Ascending aorta (tissue), 2 donors: ENCODE measurements at regions of chr19 and their contacts with region 1.

Region 1: GRCh38 chr19:10251792-10252694 is at the start of gene MRPL4:
- DNase-seq: peak; percentile 93 to 99
- H3K4me3 ChIP-seq: peak within 1 kb of the TSS; percentile 68 to 94
- H3K27ac ChIP-seq: peak within 1 kb of the TSS; percentile 68 to 71
- H3K4me1 ChIP-seq: peaks cover 6 to 7% of the 10 kb centered on the region in 2 donors
- H3K27me3 ChIP-seq: no peaks in the 10 kb centered on the region
- CTCF ChIP-seq: no peak
- total RNA-seq, gene MRPL4: 72.9 TPM

Region 2: GRCh38 chr19:9768175-9769112 is 483.6 kb before region 1 on chr19 and contains the start of gene ZNF846:
- intact Hi-C with region 1: no loop called
- DNase-seq: peak; percentile 69 to 95
- H3K4me3 ChIP-seq: peak within 1 kb of the TSS; percentile 77 to 94
- H3K27ac ChIP-seq: peak within 1 kb of the TSS; percentile 92 to 94
- H3K4me1 ChIP-seq: peaks cover 3 to 14% of the 10 kb centered on the region in 2 donors
- H3K27me3 ChIP-seq: no peaks in the 10 kb centered on the region
- CTCF ChIP-seq: no peak
- total RNA-seq, gene ZNF846: 1.9 TPM

Region 3: DNA sequence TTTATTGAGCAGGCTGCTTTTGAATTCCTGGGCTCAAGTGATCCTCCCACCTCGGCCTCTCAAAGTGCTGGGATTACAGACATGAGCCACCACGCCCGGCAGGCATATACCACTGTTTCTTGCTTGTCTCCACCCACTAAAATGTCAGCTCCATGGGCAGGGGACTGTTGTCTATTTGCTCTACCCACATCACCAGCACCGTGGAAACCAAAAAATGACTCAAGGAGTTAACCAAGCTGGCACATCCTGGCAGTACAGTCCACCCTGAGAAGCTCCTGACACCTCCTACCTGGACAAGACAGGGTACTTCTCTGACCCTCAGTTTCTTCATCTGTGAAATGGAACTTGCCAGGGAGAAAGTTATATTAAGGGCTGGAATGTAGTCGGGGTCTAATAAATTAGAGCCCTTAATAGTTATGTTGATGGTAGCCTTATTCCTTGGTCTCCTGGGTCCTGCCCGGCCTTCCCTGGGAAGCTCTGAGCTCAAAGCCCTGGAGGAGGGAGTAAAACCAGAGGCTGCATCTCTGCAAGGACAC is 224.8 kb before region 1 on chr19:
- intact Hi-C with region 1: loop called (anchors 2 kb)
- DNase-seq: no peak
- H3K4me3 ChIP-seq: peak overlapping the region in 1 of 2 donors; percentile 25
- H3K27ac ChIP-seq: no peak overlapping the region
- H3K4me1 ChIP-seq: peaks cover 0 to 5% of the 10 kb centered on the region in 2 donors
- H3K27me3 ChIP-seq: peaks cover 8% of the 10 kb centered on the region
- CTCF ChIP-seq: no peak

Region 4: GRCh38 chr19:10120538-10121189 is 131.4 kb before region 1 on chr19:
- intact Hi-C with region 1: loop called (anchors 5 kb)
- DNase-seq: peak in 1 of 2 donors; percentile 80
- H3K4me3 ChIP-seq: peak overlapping the region in 1 of 2 donors; percentile 99
- H3K27ac ChIP-seq: peak overlapping the region; percentile 84 to 87
- H3K4me1 ChIP-seq: peaks cover 15 to 27% of the 10 kb centered on the region in 2 donors
- H3K27me3 ChIP-seq: no peaks in the 10 kb centered on the region
- CTCF ChIP-seq: no peak

Region 5: GRCh38 chr19:10205636-10206035 is 46.4 kb before region 1 on chr19:
- intact Hi-C with region 1: no loop called
- DNase-seq: no peak
- H3K4me3 ChIP-seq: no peak overlapping the region
- H3K27ac ChIP-seq: no peak overlapping the region
- H3K4me1 ChIP-seq: no peaks in the 10 kb centered on the region
- H3K27me3 ChIP-seq: no peaks in the 10 kb centered on the region
- CTCF ChIP-seq: no peak

Region 6: DNA sequence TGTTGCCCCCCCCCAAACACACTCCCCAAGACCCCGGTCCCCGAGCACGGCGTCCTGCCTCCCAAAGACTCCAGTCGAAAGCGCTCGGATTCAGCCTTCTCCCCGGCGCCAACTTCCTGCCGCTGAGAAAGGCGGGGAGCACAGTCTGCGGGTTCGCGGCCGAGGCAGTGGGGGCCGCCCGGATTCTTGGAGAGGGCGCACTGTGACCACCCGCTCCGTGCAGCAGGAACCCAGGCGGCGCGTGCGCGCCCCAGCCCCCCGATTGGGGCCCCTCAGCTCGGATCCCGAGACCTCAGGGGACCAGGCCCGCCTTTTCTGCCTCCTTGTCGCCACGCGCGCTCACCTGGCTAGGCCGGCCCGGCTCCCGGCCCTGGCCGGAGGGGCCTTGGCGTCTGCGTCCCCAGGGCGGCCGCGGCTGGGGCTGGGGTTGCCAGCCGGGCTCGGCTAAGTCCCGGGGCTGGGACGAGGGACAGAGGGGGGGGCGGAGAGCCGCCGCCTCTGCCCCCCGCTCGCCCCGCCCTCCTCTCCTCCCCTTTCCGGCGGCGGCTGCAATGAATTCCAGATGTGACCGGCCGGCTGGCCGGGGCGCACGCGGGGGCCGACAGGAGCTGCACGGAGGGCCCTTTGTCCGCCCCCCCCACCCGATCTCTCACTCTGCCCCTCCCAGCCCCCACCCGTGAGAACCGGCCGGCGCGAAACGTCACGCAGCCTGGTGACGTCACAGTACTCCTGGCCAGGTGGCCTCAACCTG is 21.0 kb before region 1 on chr19 and contains the start of gene S1PR2:
- intact Hi-C with region 1: loop called (anchors 2 kb)
- DNase-seq: peak in 1 of 2 donors; percentile 87
- H3K4me3 ChIP-seq: peak within 1 kb of the TSS; percentile 73 to 98
- H3K27ac ChIP-seq: peak within 1 kb of the TSS; percentile 51 to 86
- H3K4me1 ChIP-seq: peaks cover 3 to 13% of the 10 kb centered on the region in 2 donors
- H3K27me3 ChIP-seq: no peaks in the 10 kb centered on the region
- CTCF ChIP-seq: no peak
- total RNA-seq, gene S1PR2: 24.3 TPM

Region 7: GRCh38 chr19:10292206-10292788 is 40.3 kb after region 1 on chr19:
- intact Hi-C with region 1: no loop called
- DNase-seq: peak; percentile 36 to 78
- H3K4me3 ChIP-seq: peak overlapping the region; percentile 43 to 62
- H3K27ac ChIP-seq: no peak overlapping the region
- H3K4me1 ChIP-seq: peaks cover 4 to 30% of the 10 kb centered on the region in 2 donors
- H3K27me3 ChIP-seq: peaks cover 19% of the 10 kb centered on the region
- CTCF ChIP-seq: no peak

Region 8: GRCh38 chr19:10363789-10364281 is 111.8 kb after region 1 on chr19:
- intact Hi-C with region 1: no loop called
- DNase-seq: no peak
- H3K4me3 ChIP-seq: no peak overlapping the region
- H3K27ac ChIP-seq: no peak overlapping the region
- H3K4me1 ChIP-seq: no peaks in the 10 kb centered on the region
- H3K27me3 ChIP-seq: no peaks in the 10 kb centered on the region
- CTCF ChIP-seq: no peak

Region 9: GRCh38 chr19:10380313-10381102 is 128.5 kb after region 1 on chr19 and contains the start of gene TYK2:
- intact Hi-C with region 1: loop called (anchors 5 kb)
- DNase-seq: peak; percentile 96 to 98
- H3K4me3 ChIP-seq: peak within 1 kb of the TSS; percentile 86 to 98
- H3K27ac ChIP-seq: peak within 1 kb of the TSS; percentile 66 to 73
- H3K4me1 ChIP-seq: peaks cover 0 to 14% of the 10 kb centered on the region in 2 donors
- H3K27me3 ChIP-seq: no peaks in the 10 kb centered on the region
- CTCF ChIP-seq: no peak
- total RNA-seq, gene TYK2: 80.7 TPM